ENCODE measurements at regions of chr3 and their contacts with region 1.

Region 1: DNA sequence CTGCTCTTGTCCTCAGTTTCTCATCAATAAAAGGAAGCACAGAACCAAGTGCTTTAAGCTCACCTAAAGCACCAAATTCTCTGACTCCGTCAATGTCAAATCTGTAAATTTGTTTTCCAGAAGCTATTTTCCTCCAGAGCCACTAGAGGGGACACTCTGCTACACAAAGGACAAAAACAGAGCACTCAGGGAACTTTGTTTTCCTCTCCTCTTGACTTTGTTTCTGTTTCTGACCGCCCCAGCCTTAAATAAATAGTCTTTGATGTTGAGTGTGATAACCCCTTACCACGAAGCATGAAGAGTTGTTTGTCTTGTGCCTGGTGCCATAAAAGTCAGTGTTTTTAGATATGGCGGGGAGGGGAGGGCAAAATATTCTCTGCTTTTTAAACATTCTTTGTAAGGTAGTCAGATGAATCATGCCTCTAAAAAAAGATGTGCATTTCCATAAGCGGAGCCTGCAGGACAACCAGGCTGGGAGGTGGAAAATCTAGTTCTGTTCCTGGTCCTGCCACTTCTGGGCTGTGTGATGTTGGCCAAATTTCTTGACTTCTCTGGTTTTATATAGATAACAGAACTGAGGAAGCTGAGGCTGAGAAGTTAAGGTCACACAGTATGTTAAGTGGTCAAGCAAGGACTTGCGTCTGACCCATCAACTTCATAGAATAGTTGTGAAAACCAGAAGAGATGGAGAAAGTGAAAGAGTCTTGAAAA is 7.3 kb upstream of the ZBTB38 start:
- DNase-seq: peak; percentile 92
- H3K4me3 ChIP-seq: peak overlapping the region in 1 of 3 experiments; percentile 31
- H3K27ac ChIP-seq: peak overlapping the region; percentile 53
- H3K4me1 ChIP-seq: peaks cover 18% of the 10 kb centered on the region
- H3K27me3 ChIP-seq: no peaks in the 10 kb centered on the region
- CTCF ChIP-seq: peak; percentile 69 to 72
- POLR2A ChIP-seq: no peak

Region 2: DNA sequence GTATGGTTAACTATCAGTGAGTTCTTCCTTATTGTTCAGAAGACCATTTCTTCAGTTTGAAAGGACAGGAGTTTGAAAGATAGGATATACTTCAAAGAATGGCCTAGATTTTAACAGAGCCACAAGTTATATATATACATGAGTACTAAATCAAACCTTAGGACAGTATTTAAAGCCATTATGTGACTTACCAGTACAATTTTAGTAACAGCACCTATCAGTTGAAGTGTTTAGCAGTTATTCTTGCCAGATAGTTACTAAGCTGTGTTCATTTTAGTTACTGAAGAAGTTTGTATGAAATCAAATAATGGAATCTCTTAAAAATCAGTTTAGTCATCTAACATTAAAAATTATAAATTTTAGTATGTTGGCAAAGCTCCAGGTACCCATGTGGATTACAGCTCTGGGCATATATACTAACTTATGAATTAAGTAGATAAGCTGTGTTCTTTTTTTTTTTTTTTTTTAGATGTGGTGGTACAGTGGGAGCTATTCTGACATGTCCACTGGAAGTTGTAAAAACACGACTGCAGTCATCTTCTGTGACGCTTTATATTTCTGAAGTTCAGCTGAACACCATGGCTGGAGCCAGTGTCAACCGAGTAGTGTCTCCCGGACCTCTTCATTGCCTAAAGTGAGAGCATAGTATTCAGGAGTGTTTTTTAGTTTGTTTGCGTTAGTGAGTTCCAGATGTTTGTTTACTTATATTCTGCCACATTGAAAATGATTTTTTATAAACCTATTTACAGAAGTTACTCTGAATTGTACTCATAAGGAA is 404.8 kb before region 1 on chr3:
- CTCF ChIA-PET with region 1: no interaction called
- POLR2A ChIA-PET with region 1: no interaction called
- dilution Hi-C with region 1: no loop called
- intact Hi-C with region 1: no loop called
- DNase-seq: no peak
- H3K4me3 ChIP-seq: no peak overlapping the region
- H3K27ac ChIP-seq: no peak overlapping the region
- H3K4me1 ChIP-seq: no peaks in the 10 kb centered on the region
- H3K27me3 ChIP-seq: no peaks in the 10 kb centered on the region
- CTCF ChIP-seq: no peak
- POLR2A ChIP-seq: no peak

Region 3: GRCh38 chr3:141311496-141312353 is 49.3 kb before region 1 on chr3:
- CTCF ChIA-PET with region 1: interaction called, 58 read pairs
- POLR2A ChIA-PET with region 1: no interaction called
- dilution Hi-C with region 1: no loop called
- intact Hi-C with region 1: loop called (anchors 1 kb)
- DNase-seq: peak; percentile 97
- H3K4me3 ChIP-seq: peak overlapping the region; percentile 1 to 65 (median 49)
- H3K27ac ChIP-seq: peak overlapping the region; percentile 57
- H3K4me1 ChIP-seq: peaks cover 11% of the 10 kb centered on the region
- H3K27me3 ChIP-seq: no peaks in the 10 kb centered on the region
- CTCF ChIP-seq: peak; percentile 80 to 86
- POLR2A ChIP-seq: peak; percentile 76

Region 4: GRCh38 chr3:141346418-141346817 is 14.6 kb before region 1 on chr3:
- CTCF ChIA-PET with region 1: interaction called, 25 read pairs
- POLR2A ChIA-PET with region 1: no interaction called
- dilution Hi-C with region 1: no loop called
- intact Hi-C with region 1: no loop called
- DNase-seq: peak; percentile 58
- H3K4me3 ChIP-seq: no peak overlapping the region
- H3K27ac ChIP-seq: no peak overlapping the region
- H3K4me1 ChIP-seq: peaks cover 12% of the 10 kb centered on the region
- H3K27me3 ChIP-seq: peaks cover 0 to 2% of the 10 kb centered on the region in 2 experiments
- CTCF ChIP-seq: no peak
- POLR2A ChIP-seq: no peak

Region 5: GRCh38 chr3:141402476-141403171 is 41.6 kb after region 1 on chr3:
- CTCF ChIA-PET with region 1: interaction called, 13 read pairs
- POLR2A ChIA-PET with region 1: interaction called, 3 read pairs
- dilution Hi-C with region 1: no loop called
- intact Hi-C with region 1: no loop called
- DNase-seq: peak; percentile 76
- H3K4me3 ChIP-seq: peak overlapping the region; percentile 8 to 86 (median 65)
- H3K27ac ChIP-seq: peak overlapping the region; percentile 97
- H3K4me1 ChIP-seq: peaks cover 47% of the 10 kb centered on the region
- H3K27me3 ChIP-seq: no peaks in the 10 kb centered on the region
- CTCF ChIP-seq: peak in 1 of 2 donors; percentile 2
- POLR2A ChIP-seq: peak; percentile 60

Region 6: DNA sequence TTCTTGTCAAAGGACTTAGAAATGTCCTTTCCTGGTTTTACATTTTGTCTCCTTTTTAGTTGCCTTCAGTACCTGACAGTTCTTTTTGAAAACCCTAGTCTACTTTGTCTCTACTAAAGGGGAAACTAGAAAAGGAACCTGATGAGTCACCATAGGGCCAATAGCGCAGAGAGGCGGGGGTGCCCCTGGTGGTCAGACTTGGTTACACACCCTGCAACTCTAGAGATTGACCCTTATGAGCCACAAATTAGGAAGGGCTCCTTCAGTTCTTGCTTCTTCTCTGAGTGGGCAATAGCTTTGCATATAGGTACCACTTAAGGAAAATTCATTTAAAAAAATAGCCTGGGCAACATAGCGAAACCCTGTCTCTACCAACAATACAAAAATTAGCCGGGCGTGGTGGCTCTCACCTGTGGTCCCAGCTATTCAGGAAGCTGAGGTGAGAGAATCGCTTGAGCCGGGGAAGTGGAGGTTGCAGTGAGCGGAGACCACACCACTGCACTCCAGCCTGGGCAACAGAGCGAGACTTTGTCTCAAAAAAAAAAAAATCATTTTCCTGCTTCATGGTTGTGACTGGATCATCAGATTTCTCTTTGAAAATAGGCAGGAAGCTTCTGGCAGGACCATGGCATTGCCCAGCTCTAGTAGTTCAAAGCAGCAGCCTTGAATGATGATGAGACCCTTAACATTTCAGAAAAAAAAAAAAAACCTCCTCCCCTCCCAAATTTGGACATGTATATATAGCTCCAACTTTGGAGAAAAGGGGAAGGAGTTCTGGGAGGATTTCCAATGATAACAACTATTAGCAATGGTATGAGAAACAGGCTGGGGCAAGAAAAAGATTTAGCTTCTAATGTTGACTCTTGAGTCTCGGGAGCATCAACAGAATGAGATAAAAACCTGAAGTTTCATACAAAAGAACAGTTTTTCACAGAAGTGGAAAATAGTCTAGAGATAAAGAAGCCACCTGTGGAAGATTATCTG is 80.6 kb after region 1 on chr3:
- CTCF ChIA-PET with region 1: interaction called, 84 read pairs
- POLR2A ChIA-PET with region 1: interaction called, 3 read pairs
- dilution Hi-C with region 1: no loop called
- intact Hi-C with region 1: loop called (anchors 1 kb)
- DNase-seq: peak; percentile 85
- H3K4me3 ChIP-seq: no peak overlapping the region
- H3K27ac ChIP-seq: peak overlapping the region; percentile 2
- H3K4me1 ChIP-seq: peaks cover 13% of the 10 kb centered on the region
- H3K27me3 ChIP-seq: no peaks in the 10 kb centered on the region
- CTCF ChIP-seq: peak; percentile 91 to 96
- POLR2A ChIP-seq: no peak

Region 7: GRCh38 chr3:141561426-141562034 is 200.5 kb after region 1 on chr3:
- CTCF ChIA-PET with region 1: interaction called, 5 read pairs
- POLR2A ChIA-PET with region 1: no interaction called
- dilution Hi-C with region 1: no loop called
- intact Hi-C with region 1: loop called (anchors 2 kb)
- DNase-seq: peak; percentile 85
- H3K4me3 ChIP-seq: no peak overlapping the region
- H3K27ac ChIP-seq: no peak overlapping the region
- H3K4me1 ChIP-seq: peaks cover 15% of the 10 kb centered on the region
- H3K27me3 ChIP-seq: no peaks in the 10 kb centered on the region
- CTCF ChIP-seq: peak; percentile 72 to 75
- POLR2A ChIP-seq: no peak

Region 8: DNA sequence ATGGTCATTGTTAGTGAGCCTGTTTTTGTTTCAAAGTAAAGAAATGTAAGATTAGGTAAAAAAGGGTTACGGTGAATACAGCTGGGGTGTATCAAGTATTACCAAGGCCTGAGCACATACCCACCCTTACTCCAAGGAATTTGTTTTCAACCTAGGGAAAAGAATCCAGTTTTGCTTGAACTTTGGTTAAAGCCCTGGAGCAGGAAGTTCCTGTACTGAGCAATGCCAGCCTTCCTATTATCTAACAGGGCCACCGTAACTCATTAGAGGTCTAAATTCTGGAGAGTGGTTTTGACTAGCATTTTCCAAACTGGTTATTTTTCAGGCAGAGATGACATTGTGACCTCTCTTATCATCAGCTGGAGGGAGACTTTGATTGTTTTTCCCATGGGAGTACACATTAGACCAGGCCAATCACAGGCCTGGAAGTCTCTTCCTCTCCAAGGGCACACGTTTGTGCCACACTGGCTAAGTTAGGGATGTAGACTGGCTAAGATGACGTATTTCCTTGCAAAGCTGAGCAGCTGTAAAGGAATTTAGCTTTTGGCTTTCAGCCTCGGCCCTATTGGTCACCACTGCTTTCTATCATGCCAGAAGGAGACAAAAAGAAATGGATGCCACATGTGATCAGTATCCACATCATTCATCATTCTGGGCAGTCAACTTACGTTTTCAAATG is 349.7 kb after region 1 on chr3:
- CTCF ChIA-PET with region 1: no interaction called
- POLR2A ChIA-PET with region 1: no interaction called
- dilution Hi-C with region 1: no loop called
- intact Hi-C with region 1: no loop called
- DNase-seq: peak; percentile 88
- H3K4me3 ChIP-seq: no peak overlapping the region
- H3K27ac ChIP-seq: peak overlapping the region; percentile 65
- H3K4me1 ChIP-seq: peaks cover 63% of the 10 kb centered on the region
- H3K27me3 ChIP-seq: no peaks in the 10 kb centered on the region
- CTCF ChIP-seq: no peak
- POLR2A ChIP-seq: no peak